Upper lobe of right lung (tissue), 1 donor: ENCODE measurements at regions of chr1 and their contacts with region 1.

Region 1: DNA sequence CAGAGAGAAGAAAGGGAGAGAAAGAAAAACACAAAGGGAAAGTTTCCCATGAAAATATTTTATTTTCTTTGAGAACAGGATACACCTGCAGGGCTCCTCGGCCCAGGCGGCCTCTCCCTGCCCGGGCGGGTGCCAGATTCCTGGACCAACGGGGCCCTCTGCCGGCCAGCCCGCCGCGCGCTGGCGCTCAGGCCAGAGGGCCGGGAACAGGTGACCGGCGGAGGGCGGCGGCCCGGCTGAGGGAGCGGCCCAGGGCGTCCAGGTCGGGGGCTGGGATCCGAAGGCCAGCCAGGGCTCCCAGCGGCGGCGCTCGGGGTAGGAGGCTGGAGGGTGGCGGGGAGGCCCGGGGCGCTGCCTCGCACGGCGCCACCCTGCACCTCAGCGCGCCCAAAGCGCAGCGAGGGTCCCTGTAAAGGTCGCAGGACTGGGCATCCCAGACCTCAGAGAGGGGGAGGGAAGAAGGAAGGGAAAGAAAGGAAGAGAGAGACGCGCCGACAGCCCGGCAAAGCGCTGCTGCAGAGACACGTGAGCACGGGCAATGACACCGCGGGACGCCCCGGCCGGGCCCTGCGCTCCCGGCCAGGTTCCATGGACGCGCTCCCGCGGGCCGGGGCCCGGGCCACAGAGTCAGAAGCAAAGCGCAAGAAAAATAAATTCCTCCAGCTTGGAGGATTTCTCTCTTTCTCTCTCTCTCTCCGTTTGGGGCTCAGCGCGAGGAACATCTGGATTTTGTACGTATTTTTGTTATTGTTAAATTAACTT is 927 bp downstream of the WNT9A start:
- DNase-seq: peak; percentile 91
- ATAC-seq: peak; percentile 81
- H3K4me3 ChIP-seq: peak overlapping the region; percentile 55
- H3K27ac ChIP-seq: peak overlapping the region; percentile 72
- H3K4me1 ChIP-seq: peaks cover 22% of the 10 kb centered on the region
- H3K27me3 ChIP-seq: peaks cover 11% of the 10 kb centered on the region
- CTCF ChIP-seq: peak; percentile 73

Region 2: DNA sequence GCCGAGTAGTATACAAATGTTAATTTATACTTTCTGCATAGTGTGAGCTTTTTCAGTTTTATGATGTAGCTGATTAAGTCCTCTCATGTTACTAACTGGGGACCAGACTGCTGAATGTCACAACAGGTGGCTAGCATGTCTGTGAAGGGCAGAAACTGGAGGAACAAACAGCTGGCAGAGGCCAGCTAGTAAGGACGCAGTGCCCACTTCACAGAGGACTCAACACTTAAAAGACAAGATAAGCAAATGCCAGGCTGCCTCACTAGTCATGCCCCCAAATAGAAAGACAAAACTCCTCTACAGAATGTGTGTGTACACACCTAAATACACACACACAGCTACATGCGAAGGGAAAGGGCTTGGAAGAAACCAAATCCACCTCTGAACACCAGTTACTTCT is 457.2 kb before region 1 on chr1:
- intact Hi-C with region 1: loop called (anchors 10 kb)
- DNase-seq: no peak
- ATAC-seq: no peak
- H3K4me3 ChIP-seq: no peak overlapping the region
- H3K27ac ChIP-seq: no peak overlapping the region
- H3K4me1 ChIP-seq: no peaks in the 10 kb centered on the region
- H3K27me3 ChIP-seq: no peaks in the 10 kb centered on the region
- CTCF ChIP-seq: no peak

Region 3: DNA sequence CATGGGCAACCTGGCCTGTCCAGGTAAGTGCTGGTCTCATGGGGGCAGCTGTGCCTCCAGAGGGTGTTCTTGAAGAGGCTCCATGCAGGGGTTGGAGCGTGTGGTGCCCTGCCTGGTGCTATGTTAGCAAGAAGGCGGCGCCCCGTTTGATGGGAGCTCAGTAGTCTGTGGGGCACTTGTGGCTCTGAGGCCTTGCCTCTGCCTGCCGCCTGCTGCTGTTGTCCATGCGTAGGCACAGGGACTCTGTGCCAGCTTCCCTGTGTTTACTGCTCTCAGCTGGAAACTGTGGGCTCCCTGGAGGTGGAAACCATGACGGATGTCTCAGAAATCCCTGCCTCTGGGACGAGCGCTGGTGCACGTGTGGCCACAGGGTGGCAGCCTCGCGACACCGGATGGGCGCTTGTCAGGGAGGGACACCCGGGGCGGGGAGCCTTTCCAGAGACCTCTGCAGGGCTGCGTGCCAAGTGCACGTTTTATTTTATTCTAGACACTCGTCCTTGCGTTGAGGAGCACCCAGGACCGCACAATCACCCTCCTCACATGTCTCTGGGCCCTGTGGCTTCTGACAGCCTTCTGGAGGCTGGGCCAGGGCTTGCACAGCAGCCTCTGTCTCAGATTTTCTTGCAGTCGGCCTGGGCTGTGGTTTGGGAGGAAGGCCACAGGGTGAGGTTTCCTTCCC is 184.4 kb before region 1 on chr1:
- intact Hi-C with region 1: loop called (anchors 5 kb)
- DNase-seq: peak; percentile 91
- ATAC-seq: peak; percentile 87
- H3K4me3 ChIP-seq: no peak overlapping the region
- H3K27ac ChIP-seq: peak overlapping the region; percentile 58
- H3K4me1 ChIP-seq: peaks cover 22% of the 10 kb centered on the region
- H3K27me3 ChIP-seq: no peaks in the 10 kb centered on the region
- CTCF ChIP-seq: peak; percentile 89